Naive thymus-derived CD4-positive, alpha-beta T cell (primary cell): ENCODE measurements at regions of chrX and their contacts with region 1.

Region 1: DNA sequence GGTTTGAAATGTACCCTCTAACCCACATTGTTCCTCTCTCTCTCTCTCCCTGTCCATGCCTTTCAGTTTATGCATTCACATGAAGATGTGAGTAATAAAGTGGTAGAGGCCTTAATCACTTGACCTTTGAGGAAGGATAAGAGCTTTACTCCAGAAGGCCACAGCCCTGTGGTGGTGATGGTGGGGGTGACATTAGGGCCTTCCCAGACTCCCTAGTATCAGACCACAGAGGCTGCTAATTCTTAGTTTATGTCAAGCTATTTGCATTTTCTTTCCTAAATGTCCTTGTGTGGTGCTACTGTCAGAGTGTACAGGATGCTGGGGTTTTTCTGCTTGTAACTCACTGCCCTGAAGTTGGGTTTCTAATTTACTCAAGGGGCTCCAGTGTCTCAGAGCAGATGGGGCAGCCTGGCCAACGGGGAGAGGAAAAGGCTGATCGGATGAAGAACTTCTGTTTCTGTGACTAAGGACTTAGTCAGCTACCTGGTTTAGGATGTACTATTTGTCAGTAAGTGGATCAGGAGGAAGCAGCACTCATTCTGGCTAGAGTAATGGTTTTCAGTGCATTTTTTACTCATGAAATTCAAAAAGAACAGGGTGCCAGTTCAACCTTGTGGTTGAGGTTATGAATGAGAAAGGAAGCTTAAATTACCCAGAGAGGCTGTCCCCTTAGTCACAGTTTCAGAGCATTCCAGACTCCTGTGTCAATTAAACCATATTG is 509.6 kb upstream of the DIPK2B start:
- DNase-seq: peak in 1 of 9 donors; percentile 48
- ATAC-seq: peak; percentile 3
- H3K4me3 ChIP-seq: no peak overlapping the region
- H3K4me3 Mint-ChIP-seq: peak overlapping the region in 1 of 10 donors; percentile 40
- H3K27ac ChIP-seq: no peak overlapping the region
- H3K27ac Mint-ChIP-seq: peak overlapping the region in 3 of 9 donors; percentile 25 to 69 (median 62)
- H3K4me1 ChIP-seq: peaks cover 0 to 3% of the 10 kb centered on the region in 2 donors
- H3K4me1 Mint-ChIP-seq: peaks cover 0 to 26% (median 6%) of the 10 kb centered on the region in 7 donors
- H3K27me3 ChIP-seq: no peaks in the 10 kb centered on the region
- H3K27me3 Mint-ChIP-seq: no peaks in the 10 kb centered on the region

Region 2: GRCh38 chrX:44698328-44698727 is 1011.9 kb before region 1 on chrX:
- CTCF ChIA-PET with region 1: no interaction called
- POLR2A ChIA-PET with region 1: no interaction called
- intact Hi-C with region 1: no loop called
- DNase-seq: no peak
- ATAC-seq: no peak
- H3K4me3 ChIP-seq: no peak overlapping the region
- H3K4me3 Mint-ChIP-seq: no peak overlapping the region
- H3K27ac ChIP-seq: no peak overlapping the region
- H3K27ac Mint-ChIP-seq: no peak overlapping the region
- H3K4me1 ChIP-seq: no peaks in the 10 kb centered on the region
- H3K4me1 Mint-ChIP-seq: no peaks in the 10 kb centered on the region
- H3K27me3 ChIP-seq: no peaks in the 10 kb centered on the region
- H3K27me3 Mint-ChIP-seq: no peaks in the 10 kb centered on the region

Region 3: GRCh38 chrX:45621376-45622041 is 88.7 kb before region 1 on chrX:
- CTCF ChIA-PET with region 1: no interaction called
- POLR2A ChIA-PET with region 1: no interaction called
- intact Hi-C with region 1: loop called in 1 of 2 experiments (anchors 5 kb)
- DNase-seq: peak in 1 of 9 donors; percentile 21
- ATAC-seq: no peak
- H3K4me3 ChIP-seq: no peak overlapping the region
- H3K4me3 Mint-ChIP-seq: no peak overlapping the region
- H3K27ac ChIP-seq: no peak overlapping the region
- H3K27ac Mint-ChIP-seq: no peak overlapping the region
- H3K4me1 ChIP-seq: no peaks in the 10 kb centered on the region
- H3K4me1 Mint-ChIP-seq: peaks cover 0 to 9% (median 0%) of the 10 kb centered on the region in 7 donors
- H3K27me3 ChIP-seq: no peaks in the 10 kb centered on the region
- H3K27me3 Mint-ChIP-seq: peaks cover 0 to 9% (median 0%) of the 10 kb centered on the region in 5 donors

Region 4: DNA sequence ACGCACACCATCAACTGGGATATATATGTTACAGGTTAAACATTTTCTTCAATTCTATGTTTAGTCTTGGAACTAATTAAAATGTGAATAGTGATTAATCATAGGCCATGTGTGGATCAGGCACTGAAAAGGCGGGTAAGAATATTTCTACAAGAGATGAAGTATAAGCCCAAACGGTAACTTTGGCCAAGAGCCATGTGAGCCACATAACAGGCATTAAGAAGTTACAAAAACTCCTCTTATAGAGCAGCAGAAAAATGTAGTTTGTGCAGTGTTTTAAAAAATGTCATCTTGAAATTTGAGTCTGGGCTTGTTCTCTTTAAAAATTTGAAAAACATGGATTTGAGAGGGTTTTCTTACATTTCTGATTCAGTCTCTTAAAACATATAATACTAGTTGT is 12.2 kb after region 1 on chrX:
- CTCF ChIA-PET with region 1: no interaction called
- POLR2A ChIA-PET with region 1: no interaction called
- intact Hi-C with region 1: no loop called
- DNase-seq: no peak
- ATAC-seq: no peak
- H3K4me3 ChIP-seq: no peak overlapping the region
- H3K4me3 Mint-ChIP-seq: no peak overlapping the region
- H3K27ac ChIP-seq: no peak overlapping the region
- H3K27ac Mint-ChIP-seq: no peak overlapping the region
- H3K4me1 ChIP-seq: no peaks in the 10 kb centered on the region
- H3K4me1 Mint-ChIP-seq: peaks cover 0 to 5% (median 0%) of the 10 kb centered on the region in 7 donors
- H3K27me3 ChIP-seq: no peaks in the 10 kb centered on the region
- H3K27me3 Mint-ChIP-seq: no peaks in the 10 kb centered on the region

Region 5: GRCh38 chrX:45758319-45758718 is 48.1 kb after region 1 on chrX:
- CTCF ChIA-PET with region 1: no interaction called
- POLR2A ChIA-PET with region 1: no interaction called
- intact Hi-C with region 1: loop called in 1 of 2 experiments (anchors 5 kb)
- DNase-seq: peak in 2 of 9 donors; percentile 9 to 40
- ATAC-seq: peak; percentile 47
- H3K4me3 ChIP-seq: peak overlapping the region; percentile 29
- H3K4me3 Mint-ChIP-seq: peak overlapping the region in 9 of 10 donors; percentile 62 to 84 (median 70)
- H3K27ac ChIP-seq: peak overlapping the region; percentile 31
- H3K27ac Mint-ChIP-seq: peak overlapping the region in 8 of 9 donors; percentile 49 to 93 (median 72)
- H3K4me1 ChIP-seq: peaks cover 31 to 67% of the 10 kb centered on the region in 2 donors
- H3K4me1 Mint-ChIP-seq: peaks cover 28 to 67% (median 45%) of the 10 kb centered on the region in 7 donors
- H3K27me3 ChIP-seq: no peaks in the 10 kb centered on the region
- H3K27me3 Mint-ChIP-seq: no peaks in the 10 kb centered on the region